PC-3 (cell line): ENCODE measurements at regions of chr9 and their contacts with region 1.

Region 1: DNA sequence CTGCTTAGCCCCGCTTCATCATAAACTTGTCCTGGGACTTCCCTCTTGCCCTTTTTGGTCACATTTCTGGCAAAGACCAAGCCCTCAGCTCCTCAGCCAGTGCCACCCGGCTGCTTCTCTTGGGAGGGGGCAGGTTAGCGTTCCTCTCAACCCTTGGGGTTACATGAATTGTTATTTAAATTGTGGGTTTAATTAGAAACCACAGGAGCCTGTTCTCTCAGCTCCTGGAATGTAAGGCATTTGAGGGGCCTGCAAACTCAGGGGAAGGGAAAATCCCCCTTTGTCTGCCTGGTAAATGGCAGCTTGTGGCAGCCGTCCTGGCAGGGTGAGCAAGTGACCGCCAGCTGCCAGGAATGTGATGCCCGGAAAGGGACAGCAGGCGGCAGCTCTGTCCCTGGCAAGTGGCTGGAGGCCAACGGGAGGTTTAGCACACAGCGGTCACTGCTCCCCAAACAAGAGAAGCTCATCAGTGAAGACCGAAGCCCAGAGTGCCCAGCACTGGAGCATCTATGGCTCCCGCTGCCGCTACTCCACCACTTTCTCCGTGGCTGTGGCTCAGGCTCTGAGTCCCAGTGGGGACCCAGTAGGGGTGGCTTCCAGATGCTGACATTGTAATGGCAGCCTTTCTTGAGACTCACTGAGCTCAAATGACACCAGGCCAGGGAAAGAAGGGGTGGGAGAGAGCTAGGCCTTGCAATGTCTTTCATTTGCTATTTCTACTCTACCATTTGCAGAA is 51.7 kb downstream of the SHB start:
- DNase-seq: peak; percentile 60
- ATAC-seq: peak; percentile 43
- H3K4me3 ChIP-seq: peak overlapping the region; percentile 11; the same call in 1 of the 2 replicates
- H3K27ac ChIP-seq: peak overlapping the region; percentile 97
- H3K4me1 ChIP-seq: peaks cover 62% of the 10 kb centered on the region
- H3K27me3 ChIP-seq: no peaks in the 10 kb centered on the region
- CTCF ChIP-seq: peak; percentile 55

Region 2: DNA sequence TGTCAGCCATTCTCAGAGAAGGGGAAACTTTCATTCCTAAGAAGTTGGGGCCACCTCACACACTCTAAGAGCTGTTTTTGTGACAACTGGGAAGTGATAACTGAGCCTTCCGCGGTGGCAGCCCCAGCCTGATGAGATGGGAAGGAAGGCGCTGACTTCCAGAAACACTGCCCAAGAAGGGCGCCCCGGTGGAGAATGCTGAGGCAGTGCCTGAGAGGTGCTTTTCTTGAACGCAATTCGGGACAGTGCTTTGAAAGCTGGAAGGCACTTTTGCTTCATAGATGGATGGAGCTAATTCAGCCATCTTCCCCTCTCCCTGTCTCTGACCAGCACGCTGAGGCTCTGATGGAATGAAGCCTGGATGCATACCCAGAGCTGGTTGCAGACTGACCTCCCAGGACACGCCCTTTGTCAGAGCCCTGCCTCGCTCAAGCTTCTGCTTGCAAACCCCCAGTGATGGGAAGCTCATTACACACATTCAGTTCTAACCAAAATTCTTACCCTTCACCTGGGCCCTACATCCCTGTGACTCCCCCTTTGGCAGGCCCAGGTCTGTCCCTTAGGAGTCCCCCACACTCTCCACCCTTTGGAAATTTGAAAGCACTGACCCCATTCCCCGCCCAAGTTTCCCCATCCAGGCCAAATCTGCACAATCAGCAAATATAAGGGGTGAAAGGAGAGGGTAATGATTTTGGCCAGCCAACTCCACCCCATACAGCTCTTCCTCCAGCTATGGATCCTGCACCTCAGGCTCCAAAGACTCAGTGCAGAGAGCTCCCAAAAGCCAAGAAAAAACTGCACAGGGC is 46.8 kb before region 1 on chr9:
- CTCF ChIA-PET with region 1: no interaction called
- POLR2A ChIA-PET with region 1: interaction called, 11 read pairs
- intact Hi-C with region 1: no loop called
- DNase-seq: no peak
- ATAC-seq: no peak
- H3K4me3 ChIP-seq: no peak overlapping the region
- H3K27ac ChIP-seq: peak overlapping the region; percentile 54
- H3K4me1 ChIP-seq: peaks cover 88% of the 10 kb centered on the region
- H3K27me3 ChIP-seq: no peaks in the 10 kb centered on the region
- CTCF ChIP-seq: no peak

Region 3: DNA sequence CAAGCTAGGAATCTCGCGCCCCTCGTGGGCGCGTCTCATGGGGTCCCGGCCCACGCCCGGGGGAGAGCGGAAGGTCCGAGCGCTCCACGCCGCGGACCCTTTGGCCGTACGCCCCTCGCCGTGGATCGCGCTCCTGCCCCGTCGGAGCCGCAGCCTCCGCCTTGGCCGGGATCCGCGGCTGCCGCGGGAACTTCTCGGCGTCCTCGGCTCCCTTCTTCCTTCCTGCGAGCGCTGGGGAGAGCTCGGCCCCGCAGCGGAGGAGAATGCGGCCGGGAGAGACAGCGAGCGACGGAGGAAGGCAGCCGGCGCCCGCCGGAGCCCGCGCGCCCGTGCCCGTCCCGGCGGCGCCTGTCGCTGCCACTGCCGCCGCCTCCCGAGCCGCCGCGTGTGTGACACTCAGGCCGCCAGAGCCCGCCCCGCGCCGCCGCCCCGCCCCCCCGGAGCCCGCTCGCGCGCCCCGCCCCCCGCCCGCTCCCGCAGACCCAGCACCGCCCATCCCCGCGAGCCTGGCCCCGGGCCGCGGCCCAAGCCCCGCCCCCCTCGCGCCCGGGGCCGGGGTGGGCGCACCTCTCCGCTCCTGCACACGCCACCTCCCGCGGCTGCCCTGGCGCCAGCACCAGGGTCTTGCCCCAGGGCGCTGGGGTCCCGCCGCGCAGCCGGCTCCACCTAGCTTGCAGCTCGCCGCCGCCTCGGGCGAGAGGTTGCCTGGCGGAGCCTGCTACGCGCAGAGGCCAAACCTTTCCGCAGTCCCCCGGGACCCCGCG is 51.7 kb after region 1 on chr9 and contains the start of gene SHB:
- CTCF ChIA-PET with region 1: interaction called, 3 read pairs
- POLR2A ChIA-PET with region 1: no interaction called
- intact Hi-C with region 1: loop called (anchors 2 kb)
- DNase-seq: peak; percentile 59
- ATAC-seq: peak; percentile 41
- H3K4me3 ChIP-seq: peak within 1 kb of the TSS; percentile 95
- H3K27ac ChIP-seq: peak within 1 kb of the TSS; percentile 77
- H3K4me1 ChIP-seq: peaks cover 34% of the 10 kb centered on the region
- H3K27me3 ChIP-seq: no peaks in the 10 kb centered on the region
- CTCF ChIP-seq: 0 out of 2 replicates have a peak, but pooled peaks have one; percentile 17
- total RNA-seq, gene SHB: 56.4 and 77.1 TPM in 2 replicates

Region 4: DNA sequence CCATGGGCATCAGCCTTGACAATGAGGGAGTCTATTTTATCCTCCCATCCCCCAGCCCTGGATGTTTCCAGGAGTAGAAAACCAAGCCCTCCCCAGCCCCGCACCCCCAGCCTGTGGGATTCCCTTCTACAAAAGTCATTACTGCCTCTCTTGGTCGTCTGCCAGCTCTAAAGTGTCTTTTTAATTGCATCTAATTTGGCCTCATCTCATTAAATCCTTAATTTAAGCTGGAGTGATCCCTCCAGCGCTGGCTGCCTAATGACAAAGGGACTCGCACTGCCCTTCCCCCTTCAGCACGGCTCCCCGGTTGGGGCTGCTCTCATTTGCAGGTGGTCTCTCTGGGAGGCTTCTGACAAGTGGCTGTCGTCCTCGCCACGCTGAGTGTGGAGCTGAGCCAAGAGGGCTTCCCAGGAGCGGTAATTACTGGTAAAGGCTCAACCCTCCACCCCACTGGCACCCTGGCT is 267.3 kb after region 1 on chr9:
- CTCF ChIA-PET with region 1: no interaction called
- POLR2A ChIA-PET with region 1: no interaction called
- intact Hi-C with region 1: no loop called
- DNase-seq: no peak
- ATAC-seq: no peak
- H3K4me3 ChIP-seq: no peak overlapping the region
- H3K27ac ChIP-seq: no peak overlapping the region
- H3K4me1 ChIP-seq: peaks cover 8% of the 10 kb centered on the region
- H3K27me3 ChIP-seq: no peaks in the 10 kb centered on the region
- CTCF ChIP-seq: no peak